Motor neuron (in vitro differentiated cells): ENCODE measurements at regions of chr21 and their contacts with region 1.

Region 1: GRCh38 chr21:34888569-34889319 is 160.4 kb downstream of the RUNX1 start:
- ATAC-seq: peak; percentile 39 to 81 (median 73)
- H3K4me3 ChIP-seq: peak overlapping the region; percentile 45 to 66 (median 54)
- H3K27ac ChIP-seq: no peak overlapping the region
- H3K4me1 ChIP-seq: peaks cover 7 to 8% of the 10 kb centered on the region in 2 donors

Region 2: DNA sequence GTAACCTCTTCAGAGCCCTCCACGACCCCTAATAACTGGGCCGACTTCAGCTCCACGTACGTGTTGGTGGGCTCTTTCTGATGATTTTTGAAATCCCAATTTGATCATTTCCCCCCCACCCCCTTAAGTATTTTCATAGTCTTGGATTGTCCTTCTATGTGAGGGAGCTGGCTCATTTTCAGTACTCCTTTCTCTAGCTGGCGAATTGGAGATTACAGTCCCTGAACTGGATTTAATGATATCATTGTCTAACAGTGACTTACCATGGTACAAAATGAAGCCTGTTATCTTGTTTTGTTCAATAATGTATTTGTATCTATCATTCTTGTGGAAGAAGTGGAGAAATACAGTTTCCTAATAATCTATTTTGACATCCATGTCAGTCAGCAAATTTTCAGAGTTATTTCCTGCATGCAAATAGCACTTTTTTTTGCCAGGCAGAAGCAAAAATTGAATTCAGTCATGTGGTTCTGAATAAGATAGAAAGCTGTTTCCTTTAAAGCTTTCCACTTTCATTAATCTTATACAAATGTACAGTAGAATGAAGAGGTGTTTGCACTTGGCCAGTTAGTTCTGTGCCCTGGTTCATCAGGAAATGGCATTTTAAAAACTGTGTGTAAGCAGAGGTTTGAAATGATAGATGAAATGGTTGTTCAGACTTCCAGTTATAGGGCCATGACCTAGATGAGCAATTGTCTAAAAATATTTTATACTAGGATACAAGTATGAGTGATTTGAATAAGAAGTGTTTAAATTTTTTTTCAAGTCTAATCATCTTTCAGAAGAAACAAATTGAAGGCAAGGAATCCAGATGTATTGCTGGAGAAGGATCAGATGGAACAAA is 1077.4 kb before region 1 on chr21:
- in situ Hi-C with region 1: no loop called
- ATAC-seq: peak in 5 of 8 experiments; percentile 24 to 66 (median 45)
- H3K4me3 ChIP-seq: no peak overlapping the region
- H3K27ac ChIP-seq: no peak overlapping the region
- H3K4me1 ChIP-seq: no peaks in the 10 kb centered on the region

Region 3: GRCh38 chr21:34693192-34693810 is 195.4 kb before region 1 on chr21:
- in situ Hi-C with region 1: loop called in 1 of 9 experiments (anchors 25 kb)
- ATAC-seq: peak in 3 of 8 experiments; percentile 62 to 87 (median 78)
- H3K4me3 ChIP-seq: no peak overlapping the region
- H3K27ac ChIP-seq: no peak overlapping the region
- H3K4me1 ChIP-seq: peaks cover 0 to 7% of the 10 kb centered on the region in 2 donors

Region 4: GRCh38 chr21:35057428-35057827 is 168.7 kb after region 1 on chr21:
- in situ Hi-C with region 1: no loop called
- ATAC-seq: no peak
- H3K4me3 ChIP-seq: no peak overlapping the region
- H3K27ac ChIP-seq: no peak overlapping the region
- H3K4me1 ChIP-seq: peaks cover 5 to 8% of the 10 kb centered on the region in 2 donors

Region 5: DNA sequence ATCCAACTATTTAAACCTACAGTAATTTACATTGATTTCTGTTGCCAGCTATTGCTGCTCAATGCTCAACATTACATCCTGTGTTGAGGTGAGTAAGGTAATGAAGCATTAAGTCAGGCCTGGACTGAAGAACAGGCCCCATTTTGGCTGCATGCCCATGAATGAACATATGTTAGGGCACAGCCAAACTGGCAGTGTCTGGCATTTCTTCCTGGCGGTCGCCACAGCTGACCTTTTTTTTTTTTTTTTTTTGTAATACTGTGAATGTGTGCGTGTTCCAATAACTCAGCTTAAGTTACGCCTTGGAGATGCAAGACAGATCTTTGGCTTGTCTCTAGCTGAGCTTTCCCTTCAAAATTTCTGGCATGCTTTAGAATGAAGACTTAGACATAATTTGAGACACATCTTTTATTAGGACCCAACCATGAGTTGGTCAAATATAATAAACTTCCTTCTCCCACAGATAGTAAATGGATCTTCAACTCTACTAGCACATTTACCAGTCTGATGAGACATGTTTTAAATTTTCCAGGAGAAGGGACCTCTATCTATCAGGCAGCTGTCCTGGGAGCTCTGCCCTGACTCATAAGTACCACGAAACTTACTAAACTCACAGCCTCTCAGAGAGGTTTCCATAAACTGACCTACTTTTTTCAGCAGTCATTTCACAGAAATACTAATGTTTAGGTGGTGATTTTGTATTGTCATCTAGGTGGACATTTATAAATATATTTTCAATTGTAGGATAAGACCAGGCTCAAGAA is 501.5 kb after region 1 on chr21:
- in situ Hi-C with region 1: loop called in 1 of 9 experiments (anchors 25 kb)
- ATAC-seq: no peak
- H3K4me3 ChIP-seq: no peak overlapping the region
- H3K27ac ChIP-seq: no peak overlapping the region
- H3K4me1 ChIP-seq: no peaks in the 10 kb centered on the region

Region 6: DNA sequence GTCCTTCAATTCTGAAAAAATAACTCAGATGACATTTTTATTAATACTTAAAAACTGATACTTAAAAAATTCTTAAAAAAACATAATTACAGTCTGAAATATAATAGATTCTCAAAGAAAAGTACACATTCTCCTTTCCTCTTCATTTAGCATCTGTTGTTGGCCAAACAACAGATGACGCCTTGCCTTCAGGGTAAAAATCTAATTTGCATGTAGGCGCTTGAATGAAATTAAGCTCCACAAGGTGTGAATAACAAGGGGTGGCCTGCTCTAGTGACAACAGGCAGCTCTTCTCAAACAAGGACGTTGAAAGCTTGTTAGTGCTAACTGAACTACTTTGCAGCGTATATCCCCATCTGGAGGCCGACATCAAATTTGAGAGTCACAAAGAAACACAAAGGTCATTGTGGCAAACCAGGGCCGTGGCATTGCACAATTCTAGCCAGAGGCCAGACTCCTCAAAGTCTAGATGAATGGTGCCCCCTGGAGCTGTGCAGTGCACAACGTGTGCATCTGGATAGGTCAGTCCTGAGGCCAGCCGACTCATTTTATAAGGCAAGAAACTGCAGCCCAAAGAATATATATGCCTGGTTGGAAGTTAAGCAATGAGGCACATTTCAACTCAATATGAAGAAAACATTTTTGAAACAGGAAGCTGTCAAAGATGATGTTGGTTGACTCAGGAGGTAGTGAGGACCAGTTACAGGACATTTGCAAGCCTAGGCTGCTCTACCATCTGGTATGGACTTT is 619.6 kb after region 1 on chr21:
- in situ Hi-C with region 1: loop called in 1 of 9 experiments (anchors 25 kb)
- ATAC-seq: peak in 3 of 8 experiments; percentile 14 to 80 (median 66)
- H3K4me3 ChIP-seq: no peak overlapping the region
- H3K27ac ChIP-seq: no peak overlapping the region
- H3K4me1 ChIP-seq: peaks cover 0 to 12% of the 10 kb centered on the region in 2 donors

Region 7: GRCh38 chr21:35840197-35840799 is 951.6 kb after region 1 on chr21:
- in situ Hi-C with region 1: loop called in 4 of 9 experiments (anchors 25 kb)
- ATAC-seq: peak in 4 of 8 experiments; percentile 43 to 58 (median 57)
- H3K4me3 ChIP-seq: no peak overlapping the region
- H3K27ac ChIP-seq: no peak overlapping the region
- H3K4me1 ChIP-seq: no peaks in the 10 kb centered on the region